Naive thymus-derived CD4-positive, alpha-beta T cell (primary cell): ENCODE measurements at regions of chr1 and their contacts with region 1.

Region 1: DNA sequence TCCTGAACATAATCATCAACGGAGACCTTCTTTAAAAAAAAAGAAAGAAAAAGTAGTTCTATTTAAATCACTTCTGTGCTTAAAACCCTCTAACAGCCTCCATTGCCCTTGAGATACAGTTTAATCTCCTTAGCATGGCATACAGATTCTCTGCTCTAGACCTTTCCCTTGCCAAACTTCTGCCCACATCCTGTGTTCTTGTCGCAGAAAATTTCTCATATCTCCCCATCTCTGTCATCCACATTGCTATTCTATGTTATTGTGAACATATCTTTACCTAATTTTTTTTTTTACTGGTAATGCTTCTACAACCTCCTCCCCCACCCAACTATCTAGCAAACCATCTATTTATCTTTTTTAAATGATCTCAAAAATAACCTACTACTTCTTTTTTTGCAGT is 135.7 kb upstream of the PROX1 start:
- DNase-seq: peak in 7 of 9 donors; percentile 64 to 91 (median 84)
- ATAC-seq: peak; percentile 93
- H3K4me3 ChIP-seq: peak overlapping the region; percentile 12
- H3K4me3 Mint-ChIP-seq: no peak overlapping the region
- H3K27ac ChIP-seq: peak overlapping the region; percentile 62
- H3K27ac Mint-ChIP-seq: no peak overlapping the region
- H3K4me1 ChIP-seq: peaks cover 0 to 54% of the 10 kb centered on the region in 2 donors
- H3K4me1 Mint-ChIP-seq: peaks cover 5 to 28% (median 13%) of the 10 kb centered on the region in 7 donors
- H3K27me3 ChIP-seq: no peaks in the 10 kb centered on the region
- H3K27me3 Mint-ChIP-seq: peaks cover 0 to 2% (median 0%) of the 10 kb centered on the region in 5 donors

Region 2: DNA sequence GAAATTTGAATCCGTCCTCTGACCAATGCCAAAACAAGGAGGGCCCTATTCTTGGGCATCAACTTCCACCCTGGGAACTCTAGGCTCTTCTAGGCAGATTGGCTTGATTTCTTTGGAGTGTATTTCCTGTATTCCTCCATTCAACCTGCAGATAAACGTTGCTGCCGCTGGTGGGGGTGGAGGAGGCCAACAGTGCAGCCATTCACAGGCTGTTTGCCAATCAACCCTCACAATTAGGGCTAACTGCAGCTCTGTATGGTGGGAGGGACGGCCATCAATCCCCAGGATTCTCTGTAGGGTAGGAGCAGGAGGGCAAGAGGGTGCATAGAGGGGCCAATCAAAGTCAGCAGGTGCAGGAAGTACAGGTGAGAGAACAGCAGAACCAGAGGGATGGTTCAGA is 137.5 kb before region 1 on chr1:
- CTCF ChIA-PET with region 1: no interaction called
- POLR2A ChIA-PET with region 1: no interaction called
- intact Hi-C with region 1: loop called in 1 of 2 experiments (anchors 1 kb)
- DNase-seq: no peak
- ATAC-seq: no peak
- H3K4me3 ChIP-seq: no peak overlapping the region
- H3K4me3 Mint-ChIP-seq: no peak overlapping the region
- H3K27ac ChIP-seq: no peak overlapping the region
- H3K27ac Mint-ChIP-seq: no peak overlapping the region
- H3K4me1 ChIP-seq: peaks cover 0 to 9% of the 10 kb centered on the region in 2 donors
- H3K4me1 Mint-ChIP-seq: peaks cover 2 to 36% (median 28%) of the 10 kb centered on the region in 7 donors
- H3K27me3 ChIP-seq: no peaks in the 10 kb centered on the region
- H3K27me3 Mint-ChIP-seq: no peaks in the 10 kb centered on the region

Region 3: GRCh38 chr1:213761845-213762407 is 90.2 kb before region 1 on chr1:
- CTCF ChIA-PET with region 1: no interaction called
- POLR2A ChIA-PET with region 1: interaction called, 4 read pairs
- intact Hi-C with region 1: loop called in 1 of 2 experiments (anchors 1 kb)
- DNase-seq: peak in 8 of 9 donors; percentile 24 to 76 (median 62)
- ATAC-seq: peak; percentile 96
- H3K4me3 ChIP-seq: no peak overlapping the region
- H3K4me3 Mint-ChIP-seq: peak overlapping the region in 9 of 10 donors; percentile 22 to 74 (median 56)
- H3K27ac ChIP-seq: no peak overlapping the region
- H3K27ac Mint-ChIP-seq: peak overlapping the region; percentile 26 to 93 (median 71)
- H3K4me1 ChIP-seq: peaks cover 0 to 12% of the 10 kb centered on the region in 2 donors
- H3K4me1 Mint-ChIP-seq: peaks cover 12 to 35% (median 21%) of the 10 kb centered on the region in 7 donors
- H3K27me3 ChIP-seq: no peaks in the 10 kb centered on the region
- H3K27me3 Mint-ChIP-seq: peaks cover 0 to 5% (median 0%) of the 10 kb centered on the region in 5 donors

Region 4: DNA sequence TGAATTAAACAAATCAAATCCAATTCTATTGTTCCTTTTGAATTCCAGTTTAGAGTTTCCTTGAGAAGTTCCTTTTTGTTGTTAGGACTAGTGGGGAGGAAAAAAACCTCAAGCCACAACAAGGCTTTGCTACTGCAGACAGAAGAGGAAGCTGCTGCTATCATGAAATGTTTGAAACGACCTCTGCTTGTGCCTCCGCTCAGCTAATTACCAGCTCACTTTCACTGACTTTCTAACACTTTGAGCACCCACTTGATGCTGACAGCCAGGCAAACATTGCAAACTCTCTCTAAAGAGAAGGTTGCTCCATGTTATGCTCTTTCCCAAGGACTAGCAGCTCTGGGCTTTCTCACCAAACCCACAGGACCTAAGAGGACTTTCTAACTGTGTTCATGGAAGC is 68.2 kb before region 1 on chr1:
- CTCF ChIA-PET with region 1: no interaction called
- POLR2A ChIA-PET with region 1: interaction called, 3 read pairs
- intact Hi-C with region 1: loop called in 1 of 2 experiments (anchors 1 kb)
- DNase-seq: peak in 7 of 9 donors; percentile 24 to 63 (median 52)
- ATAC-seq: peak; percentile 70
- H3K4me3 ChIP-seq: no peak overlapping the region
- H3K4me3 Mint-ChIP-seq: peak overlapping the region in 9 of 10 donors; percentile 39 to 81 (median 70)
- H3K27ac ChIP-seq: no peak overlapping the region
- H3K27ac Mint-ChIP-seq: peak overlapping the region in 6 of 9 donors; percentile 4 to 84 (median 48)
- H3K4me1 ChIP-seq: peaks cover 0 to 20% of the 10 kb centered on the region in 2 donors
- H3K4me1 Mint-ChIP-seq: peaks cover 0 to 42% (median 39%) of the 10 kb centered on the region in 7 donors
- H3K27me3 ChIP-seq: no peaks in the 10 kb centered on the region
- H3K27me3 Mint-ChIP-seq: peaks cover 6 to 17% (median 8%) of the 10 kb centered on the region in 5 donors

Region 5: DNA sequence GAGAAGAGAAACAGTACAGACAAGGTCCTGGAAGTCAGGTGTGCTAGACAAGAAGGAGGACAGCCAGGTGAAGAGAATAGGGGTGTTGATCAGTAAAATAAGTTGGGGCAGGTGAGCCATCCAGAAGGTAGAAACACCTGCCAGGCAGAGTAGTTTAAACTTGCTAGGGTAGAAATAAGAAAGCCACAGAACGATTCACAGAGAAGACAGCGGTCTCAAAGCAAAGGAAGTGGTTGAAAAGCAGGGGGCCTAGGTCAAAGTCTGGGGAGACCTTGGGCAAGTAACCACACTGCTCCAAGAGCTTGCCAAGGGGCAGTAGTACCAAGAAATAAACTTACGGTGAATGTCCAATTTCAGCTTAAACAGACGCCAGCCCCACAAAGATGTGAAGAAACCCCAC is 19.1 kb after region 1 on chr1:
- CTCF ChIA-PET with region 1: no interaction called
- POLR2A ChIA-PET with region 1: interaction called, 4 read pairs
- intact Hi-C with region 1: loop called in 1 of 2 experiments (anchors 1 kb)
- DNase-seq: peak in 6 of 9 donors; percentile 14 to 44 (median 30)
- ATAC-seq: peak; percentile 22
- H3K4me3 ChIP-seq: no peak overlapping the region
- H3K4me3 Mint-ChIP-seq: peak overlapping the region in 8 of 10 donors; percentile 12 to 72 (median 46)
- H3K27ac ChIP-seq: no peak overlapping the region
- H3K27ac Mint-ChIP-seq: peak overlapping the region in 8 of 9 donors; percentile 4 to 79 (median 32)
- H3K4me1 ChIP-seq: peaks cover 0 to 32% of the 10 kb centered on the region in 2 donors
- H3K4me1 Mint-ChIP-seq: peaks cover 0 to 60% (median 35%) of the 10 kb centered on the region in 7 donors
- H3K27me3 ChIP-seq: no peaks in the 10 kb centered on the region
- H3K27me3 Mint-ChIP-seq: no peaks in the 10 kb centered on the region